GM23248 (cell line): ENCODE measurements at regions of chr1 and their contacts with region 1.

Region 1: DNA sequence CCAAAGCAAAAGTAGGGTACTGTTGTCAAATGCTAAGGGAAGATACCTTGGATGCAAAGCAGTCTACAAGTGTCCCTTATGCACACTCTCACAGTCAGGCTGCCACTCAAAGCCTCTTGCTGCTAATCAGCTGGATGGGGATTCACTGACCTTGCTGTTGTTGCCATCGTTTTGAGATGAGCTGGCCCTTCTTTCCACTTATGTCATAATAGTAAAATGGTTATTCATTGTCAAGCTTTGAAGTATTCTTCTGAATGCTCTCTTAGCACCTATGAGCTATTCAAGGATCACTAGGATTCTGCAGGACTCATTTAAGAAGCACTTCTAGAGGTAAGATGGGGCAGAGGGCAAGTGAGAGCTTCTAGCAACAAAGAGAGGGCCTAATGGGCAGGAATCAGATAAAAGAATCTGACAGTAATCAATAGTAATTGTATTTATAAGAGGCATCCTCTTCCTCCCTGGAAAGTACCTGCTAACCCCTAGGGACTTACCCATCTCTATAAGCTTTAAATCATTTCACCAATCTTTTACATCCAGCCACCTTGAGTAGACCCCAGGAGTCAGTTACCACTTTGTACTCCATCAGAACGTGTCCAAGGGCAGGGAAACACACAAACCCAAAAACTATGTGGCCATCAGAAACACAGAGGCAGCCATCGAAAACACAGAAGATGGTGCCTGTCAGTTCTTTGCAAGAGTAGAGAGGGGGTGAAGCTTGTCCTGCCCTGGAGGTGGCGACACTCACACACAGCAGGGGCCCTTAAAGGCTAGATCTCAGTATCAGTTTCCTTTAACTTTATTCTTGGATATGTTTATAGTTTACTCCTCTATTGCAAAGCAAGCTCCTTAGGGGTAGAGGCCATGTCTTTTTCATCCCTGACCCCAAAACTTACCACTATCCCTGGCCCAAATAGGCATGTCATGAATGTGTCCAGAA is 103.7 kb upstream of the NFIA start:
- DNase-seq: peak; percentile 58
- H3K4me3 ChIP-seq: no peak overlapping the region
- H3K27ac ChIP-seq: no peak overlapping the region
- H3K4me1 ChIP-seq: no peaks in the 10 kb centered on the region
- H3K27me3 ChIP-seq: no peaks in the 10 kb centered on the region

Region 2: GRCh38 chr1:61352845-61353435 is 374.3 kb after region 1 on chr1:
- in situ Hi-C with region 1: loop called (anchors 10 kb)
- DNase-seq: no peak
- H3K4me3 ChIP-seq: no peak overlapping the region
- H3K27ac ChIP-seq: no peak overlapping the region
- H3K4me1 ChIP-seq: no peaks in the 10 kb centered on the region
- H3K27me3 ChIP-seq: no peaks in the 10 kb centered on the region

Region 3: DNA sequence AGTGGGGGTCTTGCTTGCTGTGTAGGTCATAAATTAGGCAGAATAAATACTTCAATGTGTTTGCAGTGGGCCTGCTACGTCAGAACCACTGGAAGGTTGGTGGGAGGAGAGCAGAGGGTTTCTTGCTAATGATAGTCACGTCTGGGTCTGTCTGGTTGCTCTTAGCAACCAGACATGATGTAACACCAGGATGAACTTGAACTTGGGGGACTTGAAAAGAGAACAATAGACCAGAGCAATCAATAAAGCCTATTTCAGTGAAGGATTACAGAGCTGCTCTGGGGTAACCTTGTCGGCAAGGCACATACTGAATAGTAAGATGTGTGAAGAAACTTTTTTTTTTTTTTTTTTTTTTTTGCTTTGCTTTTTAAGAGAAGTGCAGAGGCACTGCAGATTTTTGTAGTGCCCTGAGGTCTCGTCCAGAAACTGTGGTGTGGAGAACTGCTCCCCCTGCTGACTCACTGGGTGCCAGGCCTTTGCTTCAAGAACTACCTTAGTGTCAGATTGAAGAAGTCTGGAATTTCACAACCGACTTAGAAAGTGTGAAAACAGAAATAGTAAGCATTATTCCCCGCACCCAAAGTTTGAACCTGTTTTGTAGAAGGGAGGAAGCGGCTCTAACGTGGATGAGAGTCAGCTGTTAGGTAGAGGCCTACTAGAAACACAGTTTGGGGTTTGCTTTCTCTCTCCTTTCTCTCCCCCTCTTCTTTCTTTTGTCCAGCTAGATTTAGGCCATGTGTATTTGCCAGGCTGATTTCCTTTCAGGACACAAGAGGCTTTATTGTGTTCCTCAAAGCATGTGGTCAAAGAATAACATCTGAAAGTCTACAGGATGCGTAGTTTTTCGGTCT is 474.6 kb after region 1 on chr1:
- in situ Hi-C with region 1: loop called (anchors 10 kb)
- DNase-seq: peak; percentile 93
- H3K4me3 ChIP-seq: no peak overlapping the region
- H3K27ac ChIP-seq: peak overlapping the region; percentile 46
- H3K4me1 ChIP-seq: peaks cover 14% of the 10 kb centered on the region
- H3K27me3 ChIP-seq: no peaks in the 10 kb centered on the region

Region 4: DNA sequence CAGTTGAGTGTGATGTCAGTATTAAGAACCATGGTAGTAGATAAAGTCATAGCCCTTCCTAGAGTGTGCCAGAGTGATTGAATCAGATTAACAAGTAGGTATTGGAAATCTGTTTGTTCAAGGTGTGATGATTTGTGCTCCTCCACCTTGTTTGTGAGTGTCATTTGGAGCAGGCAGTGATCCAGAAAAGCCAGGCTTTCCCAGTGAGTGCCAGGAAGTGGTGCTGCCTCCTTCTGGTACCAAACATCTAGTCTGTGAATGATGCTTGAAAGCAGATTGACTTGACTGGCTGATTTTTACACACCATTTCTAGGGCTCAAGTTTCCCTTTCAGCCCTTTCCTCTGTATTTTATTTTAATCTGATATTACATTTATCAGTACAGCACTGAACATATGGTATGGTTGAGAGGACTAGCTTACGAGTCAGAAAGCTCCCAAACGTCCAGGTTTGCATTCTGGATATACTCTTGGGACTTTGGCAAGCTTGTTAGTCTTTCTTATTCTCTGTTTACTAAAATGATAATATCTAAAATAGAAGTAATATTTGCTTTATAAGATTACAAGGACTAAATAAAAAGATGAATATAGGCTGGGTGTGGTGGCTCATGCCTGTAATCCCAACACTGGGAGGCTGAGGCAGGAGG is 864.3 kb after region 1 on chr1:
- in situ Hi-C with region 1: loop called (anchors 10 kb)
- DNase-seq: peak; percentile 21
- H3K4me3 ChIP-seq: no peak overlapping the region
- H3K27ac ChIP-seq: no peak overlapping the region
- H3K4me1 ChIP-seq: peaks cover 24% of the 10 kb centered on the region
- H3K27me3 ChIP-seq: no peaks in the 10 kb centered on the region